ENCODE measurements at regions of chr7 and their contacts with region 1.

Region 1: GRCh38 chr7:30731619-30732018 is 20.3 kb upstream of the INMT start:
- DNase-seq: no peak
- H3K4me3 ChIP-seq: no peak overlapping the region
- H3K27ac ChIP-seq: no peak overlapping the region
- H3K4me1 ChIP-seq: no peaks in the 10 kb centered on the region
- H3K27me3 ChIP-seq: peaks cover 92% of the 10 kb centered on the region
- CTCF ChIP-seq: no peak

Region 2: DNA sequence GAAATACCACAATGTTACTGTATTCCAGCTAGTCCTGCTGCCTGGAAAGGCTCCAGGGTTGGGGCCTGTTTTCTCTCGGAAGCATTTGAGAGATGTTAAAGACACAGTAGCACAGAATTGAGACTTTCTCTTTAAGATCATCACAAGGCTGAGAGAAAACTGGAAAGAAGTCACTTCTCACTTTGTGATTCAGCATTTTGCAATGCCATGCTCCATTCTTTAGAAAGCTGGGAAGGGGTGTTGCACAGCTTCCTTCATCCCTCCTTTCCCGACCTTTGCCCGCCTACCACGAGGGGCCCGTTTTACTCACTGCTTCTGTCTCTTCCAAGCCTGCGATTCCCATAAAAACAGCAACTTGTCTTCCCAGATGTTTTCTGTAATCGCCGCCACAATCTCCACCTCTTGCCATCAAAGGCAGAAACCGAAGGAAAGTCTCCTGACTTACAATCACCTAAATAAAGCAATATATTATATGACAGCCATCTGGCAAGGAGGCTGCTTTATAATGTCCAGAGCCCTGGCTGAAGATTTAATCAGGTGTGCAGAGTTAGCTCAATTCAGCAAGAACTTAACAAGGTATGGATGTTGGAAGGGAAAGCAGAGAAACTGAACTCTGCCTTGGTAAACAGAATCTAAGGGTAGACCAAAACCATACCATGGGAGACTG is 271.9 kb before region 1 on chr7:
- CTCF ChIA-PET with region 1: interaction called, 10 read pairs
- POLR2A ChIA-PET with region 1: no interaction called
- intact Hi-C with region 1: no loop called
- DNase-seq: peak; percentile 61 to 90
- H3K4me3 ChIP-seq: peak overlapping the region; percentile 37; the same call in 1 of the 2 replicates
- H3K27ac ChIP-seq: peak overlapping the region; percentile 81
- H3K4me1 ChIP-seq: peaks cover 36% of the 10 kb centered on the region
- H3K27me3 ChIP-seq: no peaks in the 10 kb centered on the region
- CTCF ChIP-seq: no peak

Region 3: DNA sequence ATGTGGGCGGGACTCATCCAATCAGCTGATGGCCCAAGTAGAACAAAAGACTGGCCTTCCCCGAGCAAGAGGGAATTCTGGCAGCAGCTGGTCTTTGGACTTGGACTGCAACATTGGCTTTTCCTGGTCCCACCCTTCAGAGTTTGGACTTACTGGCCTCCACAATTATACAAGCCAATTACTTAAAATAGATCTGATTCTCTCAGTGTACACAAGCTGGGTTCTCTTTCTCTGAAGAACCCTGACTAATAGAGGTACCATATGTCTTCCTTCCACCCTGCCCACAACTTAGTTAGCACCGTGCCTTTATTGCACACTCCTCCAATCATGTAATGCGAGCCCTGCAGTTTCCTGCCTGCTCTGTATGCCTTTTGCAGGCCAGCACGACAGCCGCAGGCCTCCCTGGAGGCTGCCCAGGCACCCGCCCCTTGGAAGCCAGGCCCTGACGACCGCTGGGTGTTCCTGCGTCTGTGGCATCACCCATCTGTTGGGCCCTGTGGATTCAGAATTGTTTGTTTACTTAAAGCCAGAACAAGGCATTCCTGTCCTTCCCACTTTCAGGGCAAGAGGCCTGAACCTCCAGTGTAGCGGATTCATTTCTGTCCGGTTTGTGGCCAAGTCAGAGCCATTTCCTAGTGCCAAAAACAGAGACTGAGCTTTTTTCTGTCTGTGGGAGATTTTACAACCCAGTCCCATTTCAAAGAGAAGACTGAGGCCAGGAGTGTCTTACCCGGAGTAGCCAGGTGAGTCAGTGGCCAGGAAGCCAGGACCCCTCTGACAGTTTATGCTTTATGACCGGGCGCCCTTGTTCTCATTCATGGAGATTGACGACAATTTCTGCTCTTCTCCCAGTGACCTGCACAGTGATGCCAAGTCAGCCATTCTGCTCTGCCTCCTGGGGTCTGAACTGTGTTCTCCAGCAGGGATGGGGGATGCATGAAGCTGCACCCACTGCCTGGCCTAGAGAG is 19.3 kb after region 1 on chr7:
- CTCF ChIA-PET with region 1: no interaction called
- POLR2A ChIA-PET with region 1: no interaction called
- intact Hi-C with region 1: no loop called
- DNase-seq: no peak
- H3K4me3 ChIP-seq: no peak overlapping the region
- H3K27ac ChIP-seq: no peak overlapping the region
- H3K4me1 ChIP-seq: no peaks in the 10 kb centered on the region
- H3K27me3 ChIP-seq: peaks cover 38% of the 10 kb centered on the region
- CTCF ChIP-seq: no peak

Region 4: GRCh38 chr7:30845426-30846135 is 114.0 kb after region 1 on chr7:
- CTCF ChIA-PET with region 1: interaction called, 13 read pairs
- POLR2A ChIA-PET with region 1: no interaction called
- intact Hi-C with region 1: no loop called
- DNase-seq: peak; percentile 19 to 62
- H3K4me3 ChIP-seq: no peak overlapping the region
- H3K27ac ChIP-seq: peak overlapping the region; percentile 66
- H3K4me1 ChIP-seq: peaks cover 20% of the 10 kb centered on the region
- H3K27me3 ChIP-seq: no peaks in the 10 kb centered on the region
- CTCF ChIP-seq: no peak

Region 5: DNA sequence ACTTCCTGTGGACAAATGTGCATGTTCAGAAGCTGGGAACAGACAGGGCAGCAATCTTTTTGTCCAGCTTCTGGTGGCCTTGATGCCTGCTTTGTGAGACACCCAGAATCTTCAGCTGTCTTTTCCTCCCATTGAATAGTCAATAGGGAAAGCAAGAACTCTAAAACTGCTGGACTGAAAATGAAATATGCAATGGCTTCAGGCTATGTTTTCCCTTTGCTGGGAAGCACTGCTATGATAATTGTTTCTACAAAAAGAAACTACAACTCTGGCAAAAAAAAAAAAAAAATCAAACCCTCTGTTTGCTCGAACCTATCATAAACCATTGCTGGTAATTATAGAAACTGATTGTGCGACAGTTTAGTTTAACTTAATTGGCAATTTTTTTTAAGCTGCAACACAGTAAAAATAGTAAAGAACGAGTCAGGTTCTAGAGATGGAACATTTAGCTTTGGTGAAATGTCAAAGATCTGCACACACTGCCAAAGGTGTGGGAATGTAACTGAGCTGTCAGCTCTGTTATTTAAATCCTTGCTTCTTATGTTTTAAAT is 688.0 kb after region 1 on chr7:
- CTCF ChIA-PET with region 1: no interaction called
- POLR2A ChIA-PET with region 1: interaction called, 18 read pairs
- intact Hi-C with region 1: no loop called
- DNase-seq: no peak
- H3K4me3 ChIP-seq: no peak overlapping the region
- H3K27ac ChIP-seq: no peak overlapping the region
- H3K4me1 ChIP-seq: peaks cover 11% of the 10 kb centered on the region; the same call in 1 of the 2 replicates
- H3K27me3 ChIP-seq: no peaks in the 10 kb centered on the region; the same call in 1 of the 2 replicates
- CTCF ChIP-seq: no peak

Measured in PC-9 (cell line).